ENCODE measurements at regions of chr9 and their contacts with region 1.

Region 1: GRCh38 chr9:136482793-136483588 is at the start of gene SEC16A:
- DNase-seq: peak; percentile 100
- ATAC-seq: peak; percentile 76
- H3K4me3 Mint-ChIP-seq: peak within 1 kb of the TSS; percentile 97
- H3K27ac Mint-ChIP-seq: peak within 1 kb of the TSS; percentile 98
- H3K4me1 Mint-ChIP-seq: peaks cover 35% of the 10 kb centered on the region
- H3K27me3 Mint-ChIP-seq: no peaks in the 10 kb centered on the region
- total RNA-seq, gene SEC16A: 62.7 TPM

Region 2: DNA sequence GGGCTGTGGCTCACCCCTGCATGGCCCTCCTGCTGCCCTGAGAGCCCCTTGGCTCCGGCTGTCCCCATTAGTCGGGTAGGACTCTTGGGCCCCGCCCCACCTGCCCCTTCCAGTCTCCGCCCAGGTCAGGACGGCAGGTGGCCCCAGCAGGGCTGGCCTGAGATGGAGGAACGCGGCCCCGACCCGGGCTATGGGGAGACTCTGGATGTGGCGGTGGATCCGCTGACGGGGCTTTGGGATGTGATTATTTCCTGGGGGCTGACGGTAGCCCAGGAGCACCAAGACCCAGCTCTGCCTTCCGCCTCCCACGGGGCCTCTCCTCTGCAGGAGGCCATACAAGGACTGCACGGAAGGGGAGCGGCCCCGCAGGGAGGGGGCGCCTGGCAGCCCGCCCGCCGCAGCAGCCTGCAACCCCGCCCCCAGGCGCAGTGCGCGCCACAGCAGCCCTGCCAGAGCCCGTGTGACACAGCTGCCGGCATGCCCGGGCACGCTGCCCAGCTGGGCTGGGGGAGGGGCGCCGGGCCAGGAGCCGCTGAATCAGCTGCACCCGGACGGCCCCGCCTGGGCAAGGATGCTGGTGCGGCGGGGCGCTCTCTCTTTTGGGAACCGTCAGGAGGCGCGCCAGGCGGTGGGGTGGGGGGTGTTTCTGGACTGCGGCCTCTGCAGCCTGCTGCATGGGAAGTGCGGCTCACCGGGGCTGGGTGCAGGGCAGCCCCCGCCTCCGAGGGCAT is 373.5 kb before region 1 on chr9:
- CTCF ChIA-PET with region 1: no interaction called
- POLR2A ChIA-PET with region 1: no interaction called
- intact Hi-C with region 1: loop called in 1 of 2 experiments (anchors 2 kb)
- DNase-seq: peak; percentile 97
- ATAC-seq: peak; percentile 88
- H3K4me3 Mint-ChIP-seq: peak overlapping the region; percentile 78
- H3K27ac Mint-ChIP-seq: peak overlapping the region; percentile 97
- H3K4me1 Mint-ChIP-seq: peaks cover 71% of the 10 kb centered on the region
- H3K27me3 Mint-ChIP-seq: no peaks in the 10 kb centered on the region

Region 3: GRCh38 chr9:136410500-136411287 is 72.3 kb before region 1 on chr9 and contains the starts of genes ENTR1 and PMPCA:
- CTCF ChIA-PET with region 1: interaction called, 3 read pairs
- POLR2A ChIA-PET with region 1: no interaction called
- intact Hi-C with region 1: loop called (anchors 1 to 2 kb)
- DNase-seq: peak; percentile 98
- ATAC-seq: peak; percentile 75
- H3K4me3 Mint-ChIP-seq: peak within 1 kb of the TSS; percentile 90
- H3K27ac Mint-ChIP-seq: peak within 1 kb of the TSS; percentile 94
- H3K4me1 Mint-ChIP-seq: peaks cover 49% of the 10 kb centered on the region
- H3K27me3 Mint-ChIP-seq: no peaks in the 10 kb centered on the region
- total RNA-seq, gene ENTR1: 57.2 to 67.7 TPM
- total RNA-seq, gene PMPCA: 88.0 to 113 TPM

Region 4: DNA sequence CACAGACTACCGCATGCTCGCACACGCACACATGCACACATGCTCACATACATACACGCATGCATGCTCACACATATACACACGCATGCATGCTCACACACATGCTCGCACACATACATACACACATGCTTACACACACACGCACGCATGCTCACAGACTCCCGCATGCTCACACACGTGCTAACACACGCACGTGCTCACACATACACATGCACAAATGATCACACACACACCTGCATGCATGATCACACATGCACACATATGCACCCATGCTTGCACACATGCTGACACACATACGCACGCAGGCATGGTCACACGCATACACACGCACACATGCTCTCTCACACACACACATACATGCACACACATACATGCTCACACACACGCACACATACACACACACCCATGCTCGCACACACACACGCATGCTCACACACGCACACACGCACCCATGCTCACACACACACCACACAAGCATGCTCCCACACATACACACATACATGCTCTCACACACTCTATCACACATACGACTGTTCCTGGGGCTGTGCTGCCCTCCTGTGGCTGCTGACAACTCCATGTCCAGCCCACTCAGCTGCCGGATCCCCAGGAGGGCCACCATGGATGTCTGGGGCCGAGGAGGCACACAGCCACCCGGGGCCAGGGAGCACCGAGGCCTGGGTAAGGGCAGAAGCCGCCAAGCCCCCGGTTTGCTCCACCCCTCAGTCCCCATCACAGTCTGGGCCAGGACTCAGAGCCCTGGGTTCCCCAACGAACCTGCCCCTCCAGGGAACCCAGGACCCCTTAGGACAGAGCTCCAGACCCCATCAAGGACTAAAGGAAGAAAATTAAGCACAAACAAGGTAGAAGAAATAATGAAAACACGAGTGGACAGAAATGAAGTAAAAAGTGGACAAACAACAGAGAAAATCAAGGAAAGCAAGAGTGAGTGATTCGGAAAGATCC is 148.3 kb after region 1 on chr9:
- CTCF ChIA-PET with region 1: interaction called, 61 read pairs
- POLR2A ChIA-PET with region 1: interaction called, 4 read pairs
- intact Hi-C with region 1: loop called (anchors 1 kb)
- DNase-seq: peak; percentile 85
- ATAC-seq: peak; percentile 89
- H3K4me3 Mint-ChIP-seq: no peak overlapping the region
- H3K27ac Mint-ChIP-seq: no peak overlapping the region
- H3K4me1 Mint-ChIP-seq: no peaks in the 10 kb centered on the region
- H3K27me3 Mint-ChIP-seq: no peaks in the 10 kb centered on the region

Region 5: DNA sequence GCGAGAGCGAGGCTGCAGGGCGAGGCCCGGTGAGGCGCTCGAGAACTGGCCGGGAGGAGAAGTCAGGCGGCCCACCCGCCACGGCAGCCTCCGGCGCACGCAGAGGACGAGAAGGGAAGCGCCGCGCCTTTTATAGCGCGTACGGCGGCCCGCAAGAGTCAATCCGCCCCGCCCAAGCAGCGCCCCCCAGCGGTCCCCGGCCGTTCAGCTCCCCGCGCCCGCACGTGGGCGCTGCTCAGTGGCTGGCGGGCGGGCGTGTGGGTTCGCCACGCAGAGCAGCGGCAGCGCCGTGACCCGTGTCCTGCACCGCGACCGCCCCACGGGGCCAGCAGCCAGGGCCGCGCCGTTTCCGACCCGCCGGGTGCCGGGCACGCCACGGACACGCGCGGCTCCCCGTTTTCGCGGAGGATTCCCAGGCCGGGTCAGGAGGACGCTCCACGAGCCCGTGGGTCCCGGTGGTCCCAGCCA is 245.1 kb after region 1 on chr9:
- CTCF ChIA-PET with region 1: interaction called, 3 read pairs
- POLR2A ChIA-PET with region 1: interaction called, 3 read pairs
- intact Hi-C with region 1: loop called in 1 of 2 experiments (anchors 1 kb)
- DNase-seq: peak; percentile 95
- ATAC-seq: peak; percentile 72
- H3K4me3 Mint-ChIP-seq: peak overlapping the region; percentile 100
- H3K27ac Mint-ChIP-seq: no peak overlapping the region
- H3K4me1 Mint-ChIP-seq: peaks cover 39% of the 10 kb centered on the region
- H3K27me3 Mint-ChIP-seq: no peaks in the 10 kb centered on the region

Region 6: DNA sequence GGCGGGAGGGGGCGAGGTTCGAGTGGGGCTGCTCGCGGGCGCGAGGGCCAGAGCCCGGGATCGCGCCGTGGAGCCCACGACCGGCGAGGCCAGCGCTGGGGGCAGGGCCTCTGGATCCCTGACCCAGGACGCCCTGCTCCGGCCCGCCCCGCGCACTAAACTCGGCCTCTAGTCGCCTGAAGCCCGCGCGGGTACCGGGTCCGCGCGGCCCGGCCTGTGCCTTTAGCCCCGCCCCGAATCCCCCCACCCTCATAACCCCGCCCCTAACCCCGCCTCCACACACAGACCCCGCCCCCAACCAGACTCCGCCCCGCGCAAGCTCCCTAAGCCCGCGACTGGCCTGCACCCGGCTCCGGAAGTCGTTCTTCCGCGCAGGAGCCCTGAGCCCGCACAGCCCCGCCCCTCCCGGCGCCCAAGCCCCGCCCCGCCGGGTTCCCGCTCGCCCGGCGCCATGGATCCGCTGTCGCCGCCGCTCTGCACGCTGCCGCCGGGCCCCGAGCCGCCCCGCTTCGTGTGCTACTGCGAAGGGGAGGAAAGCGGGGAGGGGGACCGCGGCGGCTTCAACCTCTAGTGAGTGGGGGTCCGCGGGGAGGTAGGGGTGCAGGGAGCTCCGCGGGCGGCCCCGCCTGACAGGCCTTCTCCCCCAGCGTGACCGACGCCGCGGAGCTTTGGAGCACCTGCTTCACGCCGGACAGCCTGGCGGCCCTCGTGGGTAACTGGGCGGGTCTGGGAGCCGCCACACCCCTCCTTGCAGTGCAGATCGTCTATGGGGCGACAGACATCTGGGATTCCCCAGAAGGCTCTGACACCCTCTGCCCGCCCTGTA is 509.2 kb after region 1 on chr9 and contains the start of gene PAXX:
- CTCF ChIA-PET with region 1: no interaction called
- POLR2A ChIA-PET with region 1: interaction called, 3 read pairs
- intact Hi-C with region 1: loop called in 1 of 2 experiments (anchors 1 kb)
- DNase-seq: peak; percentile 98
- ATAC-seq: peak; percentile 95
- H3K4me3 Mint-ChIP-seq: peak within 1 kb of the TSS; percentile 81
- H3K27ac Mint-ChIP-seq: peak within 1 kb of the TSS; percentile 70
- H3K4me1 Mint-ChIP-seq: peaks cover 22% of the 10 kb centered on the region
- H3K27me3 Mint-ChIP-seq: peaks cover 4% of the 10 kb centered on the region
- total RNA-seq, gene PAXX: 52.7 to 67.1 TPM

Region 7: GRCh38 chr9:137254624-137255447 is 771.8 kb after region 1 on chr9 and contains the start of gene NELFB:
- CTCF ChIA-PET with region 1: no interaction called
- POLR2A ChIA-PET with region 1: no interaction called
- intact Hi-C with region 1: loop called in 1 of 2 experiments (anchors 2 kb)
- DNase-seq: peak; percentile 97
- ATAC-seq: peak; percentile 94
- H3K4me3 Mint-ChIP-seq: peak within 1 kb of the TSS; percentile 87
- H3K27ac Mint-ChIP-seq: peak within 1 kb of the TSS; percentile 81
- H3K4me1 Mint-ChIP-seq: peaks cover 18% of the 10 kb centered on the region
- H3K27me3 Mint-ChIP-seq: no peaks in the 10 kb centered on the region
- total RNA-seq, gene NELFB: 41.4 to 54.1 TPM

Measured in activated CD4-positive, alpha-beta T cell treated with anti-CD3 and anti-CD28 coated beads for 36 hours (primary cell).